GM12878 (cell line): ENCODE measurements at regions of chr1 and their contacts with region 1.

Region 1: DNA sequence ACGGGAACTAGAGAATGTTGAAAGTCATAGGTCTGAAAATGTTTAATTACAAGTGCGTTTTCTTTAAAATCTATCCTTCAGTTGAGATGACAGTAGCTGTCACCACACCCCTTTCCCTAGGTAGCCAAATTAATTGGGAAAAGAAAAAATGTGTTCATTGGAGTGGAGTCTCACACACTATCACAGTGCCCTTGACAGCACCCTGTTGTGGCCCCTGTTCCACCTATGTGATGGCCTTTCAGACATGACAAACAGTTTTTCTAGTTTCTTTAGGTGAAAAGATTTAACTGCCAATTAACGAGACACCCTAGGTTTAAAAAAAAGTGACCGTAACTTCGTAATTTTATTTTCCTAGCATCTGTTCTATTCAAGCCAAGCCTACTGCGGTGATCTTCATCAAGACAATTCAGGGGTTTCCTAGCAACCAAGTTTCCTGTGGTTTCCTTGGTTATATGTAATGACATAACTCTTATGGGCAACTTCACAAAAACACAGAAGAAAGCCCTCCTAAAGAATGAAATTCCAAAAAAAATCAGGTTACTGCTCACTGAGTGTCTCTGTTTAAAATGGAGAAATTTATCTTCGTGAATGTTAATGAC is 298.3 kb downstream of the PDE4B start:
- DNase-seq: no peak
- ATAC-seq: no peak
- H3K4me3 ChIP-seq: no peak overlapping the region
- H3K27ac ChIP-seq: no peak overlapping the region
- H3K4me1 ChIP-seq: no peaks in the 10 kb centered on the region
- H3K27me3 ChIP-seq: no peaks in the 10 kb centered on the region
- CTCF ChIP-seq: no peak
- EP300 ChIP-seq: no peak
- POLR2A ChIP-seq: no peak
- RAD21 ChIP-seq: no peak

Region 2: DNA sequence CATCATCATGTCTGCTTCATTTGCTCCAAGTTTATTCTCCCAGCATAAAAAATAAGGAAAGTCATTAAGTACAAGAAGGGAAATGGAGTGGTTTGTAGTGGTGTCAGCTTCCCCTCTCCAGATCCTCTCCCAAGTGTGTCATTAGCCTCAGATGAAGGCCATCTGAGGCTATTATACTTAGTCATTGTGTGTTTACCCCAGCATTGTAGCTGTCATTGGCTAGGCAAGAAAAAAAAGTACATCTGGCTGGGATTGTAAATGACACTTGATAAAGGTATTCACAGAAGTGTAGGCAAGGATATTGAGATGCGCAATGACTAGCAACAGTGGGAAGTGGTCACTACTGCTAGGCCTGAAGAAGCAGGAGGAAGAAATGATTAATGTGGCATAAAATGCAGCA is 126.1 kb after region 1 on chr1:
- CTCF ChIA-PET with region 1: no interaction called
- POLR2A ChIA-PET with region 1: no interaction called
- RAD21 ChIA-PET with region 1: no interaction called
- SMC1A ChIA-PET with region 1: no interaction called
- in situ Hi-C with region 1: no loop called
- intact Hi-C with region 1: loop called (anchors 5 kb)
- DNase-seq: no peak
- ATAC-seq: no peak
- H3K4me3 ChIP-seq: no peak overlapping the region
- H3K27ac ChIP-seq: no peak overlapping the region
- H3K4me1 ChIP-seq: no peaks in the 10 kb centered on the region
- H3K27me3 ChIP-seq: no peaks in the 10 kb centered on the region
- CTCF ChIP-seq: no peak
- EP300 ChIP-seq: no peak
- POLR2A ChIP-seq: no peak
- RAD21 ChIP-seq: no peak

Region 3: DNA sequence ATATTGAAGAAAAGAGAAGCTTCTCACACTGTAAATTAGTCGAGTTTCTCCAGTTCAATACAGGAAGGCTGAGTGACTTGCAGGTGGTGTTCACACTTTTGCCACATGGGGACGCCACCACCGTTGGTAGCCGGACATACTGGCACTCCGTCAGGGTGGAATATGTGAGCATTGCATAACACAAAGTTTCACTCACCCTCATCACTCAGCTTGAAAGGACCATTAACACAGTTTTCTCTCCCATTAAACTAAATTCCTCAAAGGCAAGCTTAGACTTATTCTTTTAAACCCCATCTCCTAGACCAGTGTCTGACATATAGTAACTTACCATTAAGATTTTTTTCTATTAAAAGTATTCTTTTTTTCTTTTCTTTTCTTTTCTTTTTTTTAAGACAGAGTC is 1444.5 kb after region 1 on chr1:
- CTCF ChIA-PET with region 1: no interaction called
- POLR2A ChIA-PET with region 1: no interaction called
- RAD21 ChIA-PET with region 1: no interaction called
- SMC1A ChIA-PET with region 1: no interaction called
- in situ Hi-C with region 1: no loop called
- intact Hi-C with region 1: no loop called
- DNase-seq: peak; percentile 9
- ATAC-seq: peak; percentile 90
- H3K4me3 ChIP-seq: no peak overlapping the region
- H3K27ac ChIP-seq: no peak overlapping the region
- H3K4me1 ChIP-seq: no peaks in the 10 kb centered on the region
- H3K27me3 ChIP-seq: no peaks in the 10 kb centered on the region
- CTCF ChIP-seq: peak; percentile 66 to 77 (median 75)
- EP300 ChIP-seq: no peak
- POLR2A ChIP-seq: no peak
- RAD21 ChIP-seq: peak; percentile 65